Heart right ventricle (tissue), 16 donors: ENCODE measurements at regions of chr3 and their contacts with region 1.

Region 1: GRCh38 chr3:194782698-194783404 is 97.2 kb downstream of the FAM43A start:
- DNase-seq: no peak
- ATAC-seq: peak in 5 of 8 donors; percentile 36 to 68 (median 50)
- H3K4me3 ChIP-seq: no peak overlapping the region
- H3K27ac ChIP-seq: peak overlapping the region in 6 of 10 donors; percentile 7 to 63 (median 37)
- H3K4me1 ChIP-seq: peaks cover 11 to 46% (median 30%) of the 10 kb centered on the region in 9 donors
- H3K27me3 ChIP-seq: no peaks in the 10 kb centered on the region
- CTCF ChIP-seq: no peak

Region 2: GRCh38 chr3:194814878-194815357 is 32.1 kb after region 1 on chr3:
- intact Hi-C with region 1: loop called in 3 of 10 experiments (anchors 5 kb)
- DNase-seq: peak in 1 of 2 donors; percentile 22
- ATAC-seq: peak; percentile 51 to 82 (median 65)
- H3K4me3 ChIP-seq: no peak overlapping the region
- H3K27ac ChIP-seq: peak overlapping the region in 6 of 10 donors; percentile 30 to 67 (median 45)
- H3K4me1 ChIP-seq: peaks cover 0 to 6% (median 0%) of the 10 kb centered on the region in 9 donors
- H3K27me3 ChIP-seq: no peaks in the 10 kb centered on the region
- CTCF ChIP-seq: no peak

Region 3: DNA sequence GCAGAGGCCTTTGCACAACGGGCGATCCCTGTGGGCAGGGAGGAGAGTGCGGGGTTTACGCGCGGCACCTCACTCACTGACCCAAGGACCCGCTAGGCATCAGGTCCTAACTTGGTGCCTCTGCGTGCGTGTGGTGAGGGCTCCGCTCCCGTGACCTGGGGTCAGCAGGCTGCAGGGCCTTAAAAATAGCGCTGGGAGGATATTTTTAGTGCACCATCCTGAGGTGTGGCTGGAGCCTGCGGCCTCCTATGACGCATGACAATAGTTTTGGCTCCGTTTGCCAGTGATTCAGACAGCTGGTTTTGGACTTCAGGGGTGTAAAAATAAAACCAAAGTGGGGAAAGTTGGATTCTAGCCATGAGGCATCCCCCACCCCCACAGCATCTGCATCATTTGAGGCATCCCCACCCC is 41.9 kb after region 1 on chr3:
- intact Hi-C with region 1: loop called in 3 of 10 experiments (anchors 5 kb)
- DNase-seq: peak; percentile 73 to 87
- ATAC-seq: peak; percentile 92 to 99 (median 98)
- H3K4me3 ChIP-seq: peak overlapping the region in 3 of 10 donors; percentile 12 to 23 (median 12)
- H3K27ac ChIP-seq: peak overlapping the region in 9 of 10 donors; percentile 47 to 94 (median 82)
- H3K4me1 ChIP-seq: peaks cover 4 to 30% (median 23%) of the 10 kb centered on the region in 9 donors
- H3K27me3 ChIP-seq: no peaks in the 10 kb centered on the region
- CTCF ChIP-seq: no peak

Region 4: GRCh38 chr3:194879991-194880939 is 97.4 kb after region 1 on chr3:
- intact Hi-C with region 1: loop called in 1 of 10 experiments (anchors 5 kb)
- DNase-seq: peak; percentile 75 to 84
- ATAC-seq: peak; percentile 64 to 86 (median 76)
- H3K4me3 ChIP-seq: no peak overlapping the region
- H3K27ac ChIP-seq: peak overlapping the region; percentile 32 to 91 (median 81)
- H3K4me1 ChIP-seq: peaks cover 29 to 87% (median 64%) of the 10 kb centered on the region in 9 donors
- H3K27me3 ChIP-seq: no peaks in the 10 kb centered on the region
- CTCF ChIP-seq: no peak

Region 5: DNA sequence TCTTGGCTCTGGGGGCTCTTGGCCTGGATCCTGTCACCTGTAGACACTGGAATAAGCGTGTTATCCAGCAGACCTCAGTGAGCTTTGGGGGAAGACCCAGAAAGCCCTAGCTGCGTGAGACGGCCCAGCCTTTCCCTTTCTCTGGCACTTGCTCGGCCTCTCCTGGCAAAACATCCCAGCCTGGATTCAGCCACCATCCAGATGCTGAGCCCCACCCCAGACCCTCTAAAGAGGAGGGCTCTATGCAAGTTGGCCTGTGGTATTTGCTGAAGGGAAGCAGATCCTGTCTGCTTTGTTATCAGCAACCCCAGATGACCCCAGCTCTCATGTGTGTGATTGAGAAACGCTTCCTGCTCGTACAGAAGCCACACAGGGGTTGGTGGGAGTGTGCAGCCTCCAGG is 170.0 kb after region 1 on chr3:
- intact Hi-C with region 1: loop called in 1 of 10 experiments (anchors 5 kb)
- DNase-seq: peak in 1 of 2 donors; percentile 48
- ATAC-seq: peak; percentile 52 to 84 (median 76)
- H3K4me3 ChIP-seq: no peak overlapping the region
- H3K27ac ChIP-seq: peak overlapping the region in 9 of 10 donors; percentile 24 to 81 (median 49)
- H3K4me1 ChIP-seq: peaks cover 7 to 47% (median 24%) of the 10 kb centered on the region in 9 donors
- H3K27me3 ChIP-seq: no peaks in the 10 kb centered on the region
- CTCF ChIP-seq: no peak

Region 6: DNA sequence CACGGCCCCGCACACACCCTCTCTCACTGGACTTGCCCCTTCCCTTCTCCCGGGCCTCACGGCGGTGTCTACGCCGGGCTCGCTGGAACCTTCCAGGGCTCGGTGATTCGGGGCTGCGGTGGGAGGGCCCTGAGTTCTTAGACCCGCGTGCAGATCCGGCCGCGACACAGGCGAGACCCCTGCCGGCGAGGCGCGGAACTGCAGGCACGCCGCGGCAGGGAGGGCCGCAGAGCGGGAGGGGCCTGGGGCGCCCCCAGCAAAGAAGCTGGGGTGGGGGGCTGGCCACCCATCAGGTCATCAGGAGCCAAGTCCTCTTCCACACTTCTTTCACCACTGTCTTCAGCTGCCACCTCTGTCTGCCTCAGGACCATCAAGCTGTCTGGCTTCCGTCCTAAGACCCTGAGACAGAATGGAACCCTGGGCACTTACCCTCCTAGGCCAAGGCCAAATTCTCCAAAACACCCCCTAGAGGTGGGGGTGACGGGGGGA is 323.6 kb after region 1 on chr3:
- intact Hi-C with region 1: loop called in 1 of 10 experiments (anchors 10 kb)
- DNase-seq: peak; percentile 66 to 80
- ATAC-seq: peak; percentile 65 to 86 (median 80)
- H3K4me3 ChIP-seq: peak overlapping the region in 7 of 10 donors; percentile 2 to 44 (median 32)
- H3K27ac ChIP-seq: peak overlapping the region in 2 of 10 donors; percentile 10 to 44
- H3K4me1 ChIP-seq: peaks cover 7 to 41% (median 19%) of the 10 kb centered on the region in 9 donors
- H3K27me3 ChIP-seq: no peaks in the 10 kb centered on the region
- CTCF ChIP-seq: peak; percentile 99 to 100 (median 100)